Calu3 (cell line): ENCODE measurements at regions of chr12 and their contacts with region 1.

Region 1: GRCh38 chr12:120710031-120710804 is at the start of gene UNC119B:
- DNase-seq: peak; percentile 83
- H3K4me3 Mint-ChIP-seq: peak within 1 kb of the TSS; percentile 94
- H3K27ac Mint-ChIP-seq: peak within 1 kb of the TSS; percentile 85
- H3K4me1 Mint-ChIP-seq: peaks cover 35% of the 10 kb centered on the region
- H3K27me3 Mint-ChIP-seq: no peaks in the 10 kb centered on the region
- CTCF ChIP-seq: no peak
- total RNA-seq, gene UNC119B: 31.6 and 33.5 TPM in 2 replicates

Region 2: DNA sequence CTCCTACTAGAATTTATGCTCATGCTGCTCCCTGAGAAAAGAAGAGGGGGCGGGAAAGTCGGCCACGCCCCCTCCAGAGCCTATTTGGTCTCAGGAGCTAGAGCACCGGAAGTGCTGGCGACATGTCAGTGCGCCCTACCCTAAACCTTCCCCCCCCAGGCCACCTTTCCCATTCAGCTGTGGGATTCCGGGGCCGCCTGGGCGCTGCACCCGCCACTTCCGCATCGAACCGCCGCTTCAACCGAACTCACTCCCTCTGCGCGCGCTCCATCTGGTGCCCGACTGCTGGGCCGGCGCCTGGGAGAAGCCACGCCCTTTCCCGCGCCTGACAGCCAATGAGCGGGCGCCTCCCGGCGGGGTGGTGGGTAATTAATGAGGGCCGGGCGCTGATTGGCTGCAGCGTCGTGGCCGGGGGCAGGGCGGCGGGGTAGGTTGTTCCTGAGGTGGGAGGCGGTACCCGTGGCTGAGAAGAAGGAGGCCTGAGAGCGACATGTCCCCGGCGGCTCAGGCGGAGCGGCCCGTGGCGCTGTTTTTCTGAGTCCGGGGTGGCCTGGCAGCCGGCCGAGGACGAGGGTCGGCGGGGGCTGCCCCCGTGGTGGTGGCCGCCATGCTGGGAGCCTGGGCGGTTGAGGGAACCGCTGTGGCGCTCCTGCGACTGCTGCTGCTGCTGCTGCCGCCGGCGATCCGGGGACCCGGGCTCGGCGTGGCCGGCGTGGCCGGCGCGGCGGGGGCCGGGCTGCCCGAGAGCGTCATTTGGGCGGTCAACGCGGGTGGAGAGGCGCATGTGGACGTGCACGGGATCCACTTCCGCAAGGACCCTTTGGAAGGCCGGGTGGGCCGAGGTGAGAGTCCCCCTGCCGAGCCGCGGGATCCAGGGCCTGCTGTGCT is 23.3 kb before region 1 on chr12 and contains the start of gene MLEC:
- CTCF ChIA-PET with region 1: no interaction called
- intact Hi-C with region 1: loop called (anchors 2 kb)
- DNase-seq: peak; percentile 99
- H3K4me3 Mint-ChIP-seq: peak within 1 kb of the TSS; percentile 91
- H3K27ac Mint-ChIP-seq: peak within 1 kb of the TSS; percentile 85
- H3K4me1 Mint-ChIP-seq: peaks cover 27% of the 10 kb centered on the region
- H3K27me3 Mint-ChIP-seq: no peaks in the 10 kb centered on the region
- CTCF ChIP-seq: no peak
- total RNA-seq, gene MLEC: 268 and 290 TPM in 2 replicates

Region 3: GRCh38 chr12:120761519-120761934 is 51.3 kb after region 1 on chr12:
- CTCF ChIA-PET with region 1: no interaction called
- intact Hi-C with region 1: no loop called
- DNase-seq: no peak
- H3K4me3 Mint-ChIP-seq: no peak overlapping the region
- H3K27ac Mint-ChIP-seq: no peak overlapping the region
- H3K4me1 Mint-ChIP-seq: no peaks in the 10 kb centered on the region
- H3K27me3 Mint-ChIP-seq: no peaks in the 10 kb centered on the region
- CTCF ChIP-seq: no peak

Region 4: GRCh38 chr12:120961604-120962531 is 251.7 kb after region 1 on chr12:
- CTCF ChIA-PET with region 1: no interaction called
- intact Hi-C with region 1: no loop called
- DNase-seq: peak; percentile 80
- H3K4me3 Mint-ChIP-seq: no peak overlapping the region
- H3K27ac Mint-ChIP-seq: peak overlapping the region; percentile 82
- H3K4me1 Mint-ChIP-seq: peaks cover 62% of the 10 kb centered on the region
- H3K27me3 Mint-ChIP-seq: no peaks in the 10 kb centered on the region
- CTCF ChIP-seq: no peak